Natural killer cell (primary cell): ENCODE measurements at regions of chr11 and their contacts with region 1.

Region 1: DNA sequence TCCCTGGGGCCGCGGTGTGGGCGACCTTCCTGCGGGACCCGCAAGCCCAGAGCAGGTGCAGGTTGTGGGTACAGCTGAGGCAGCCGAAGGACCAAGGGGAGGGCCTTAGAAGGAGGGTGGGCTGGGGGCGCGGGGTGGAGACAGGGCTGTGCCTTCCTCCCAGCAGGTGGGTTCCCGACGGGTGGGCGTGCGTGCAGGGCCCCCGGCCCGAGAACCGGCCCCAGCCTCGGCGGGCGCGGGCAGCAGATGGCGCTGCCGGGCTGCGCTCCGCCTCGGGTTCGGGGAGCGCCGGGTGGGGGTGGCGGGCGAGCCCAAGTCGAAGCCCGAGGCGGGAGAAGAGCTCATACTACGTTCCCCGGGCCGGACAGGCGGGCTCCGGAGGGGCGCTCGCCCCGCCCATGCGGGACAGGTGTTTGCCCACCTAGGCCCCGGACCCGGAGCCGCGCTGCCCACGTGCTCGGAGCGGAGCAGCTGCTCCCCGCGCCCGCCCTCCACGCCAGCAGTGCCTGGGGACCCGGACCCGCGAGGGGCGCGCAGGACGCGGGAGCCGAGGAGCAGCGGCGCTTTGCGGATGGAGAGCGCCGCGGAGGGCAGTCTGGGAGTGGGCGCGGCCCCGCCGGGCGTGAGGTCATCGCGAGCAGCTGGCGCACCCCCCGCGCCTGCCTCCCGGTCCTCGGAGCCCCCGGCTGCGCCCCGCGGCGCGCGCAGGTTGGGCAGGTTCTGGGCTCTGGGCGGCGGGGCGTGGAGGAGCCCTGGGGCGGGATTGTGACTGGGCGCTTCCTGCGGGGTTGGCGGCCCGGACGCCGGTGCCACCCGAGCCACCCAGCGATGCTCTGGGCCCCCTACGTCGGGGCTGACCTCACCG is 25.3 kb downstream of the DUSP8 start:
- DNase-seq: peak in 1 of 2 donors; percentile 78
- ATAC-seq: peak; percentile 70 to 76 (median 75)
- H3K4me3 ChIP-seq: no peak overlapping the region
- H3K4me3 Mint-ChIP-seq: no peak overlapping the region
- H3K27ac ChIP-seq: no peak overlapping the region
- H3K27ac Mint-ChIP-seq: no peak overlapping the region
- H3K4me1 ChIP-seq: peaks cover 17% of the 10 kb centered on the region
- H3K4me1 Mint-ChIP-seq: no peaks in the 10 kb centered on the region
- H3K27me3 ChIP-seq: peaks cover 17% of the 10 kb centered on the region
- H3K27me3 Mint-ChIP-seq: peaks cover 18 to 27% of the 10 kb centered on the region in 2 donors
- CTCF ChIP-seq: peak; percentile 68

Region 2: GRCh38 chr11:1564535-1565172 is 17.9 kb after region 1 on chr11:
- intact Hi-C with region 1: no loop called
- DNase-seq: peak; percentile 44 to 52
- ATAC-seq: peak in 1 of 3 donors; percentile 27
- H3K4me3 ChIP-seq: no peak overlapping the region
- H3K4me3 Mint-ChIP-seq: no peak overlapping the region
- H3K27ac ChIP-seq: no peak overlapping the region
- H3K27ac Mint-ChIP-seq: no peak overlapping the region
- H3K4me1 ChIP-seq: peaks cover 29% of the 10 kb centered on the region
- H3K4me1 Mint-ChIP-seq: peaks cover 10 to 27% of the 10 kb centered on the region in 2 donors
- H3K27me3 ChIP-seq: peaks cover 1% of the 10 kb centered on the region
- H3K27me3 Mint-ChIP-seq: peaks cover 0 to 8% of the 10 kb centered on the region in 2 donors
- CTCF ChIP-seq: no peak

Region 3: GRCh38 chr11:1628506-1629325 is 81.9 kb after region 1 on chr11:
- intact Hi-C with region 1: loop called (anchors 5 kb)
- DNase-seq: peak; percentile 61 to 78
- ATAC-seq: peak; percentile 82 to 99 (median 98)
- H3K4me3 ChIP-seq: no peak overlapping the region
- H3K4me3 Mint-ChIP-seq: no peak overlapping the region
- H3K27ac ChIP-seq: no peak overlapping the region
- H3K27ac Mint-ChIP-seq: no peak overlapping the region
- H3K4me1 ChIP-seq: peaks cover 9% of the 10 kb centered on the region
- H3K4me1 Mint-ChIP-seq: no peaks in the 10 kb centered on the region
- H3K27me3 ChIP-seq: peaks cover 7% of the 10 kb centered on the region
- H3K27me3 Mint-ChIP-seq: peaks cover 31 to 51% of the 10 kb centered on the region in 2 donors
- CTCF ChIP-seq: peak; percentile 85

Region 4: DNA sequence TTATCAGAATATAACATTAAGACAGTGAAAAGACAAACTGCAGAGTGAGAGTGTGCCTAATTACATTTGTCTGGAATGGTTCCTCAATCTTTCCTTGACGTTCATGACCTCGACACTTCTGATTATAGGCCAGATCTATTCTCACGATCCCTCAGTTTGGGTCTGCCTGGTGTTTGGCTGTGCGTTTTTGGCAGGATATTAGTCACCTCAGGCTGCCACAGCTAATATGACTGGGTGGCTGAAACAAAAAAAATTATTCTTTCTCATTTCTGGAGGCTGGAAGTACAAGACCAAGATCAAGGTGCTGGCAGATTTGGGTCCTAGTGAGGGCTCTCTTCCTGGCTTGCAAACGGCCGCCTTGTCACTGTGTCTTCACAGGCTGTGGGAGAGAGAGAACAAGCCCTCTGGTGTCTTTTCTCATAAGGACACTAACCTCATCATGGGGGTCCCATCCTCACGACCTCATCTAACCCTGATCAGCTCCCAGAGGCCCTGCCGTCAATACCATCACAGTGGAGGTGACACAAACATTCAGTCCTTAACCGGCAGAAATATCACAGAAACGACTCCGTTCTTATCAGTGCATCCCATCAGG is 180.4 kb after region 1 on chr11:
- intact Hi-C with region 1: no loop called
- DNase-seq: no peak
- ATAC-seq: no peak
- H3K4me3 ChIP-seq: no peak overlapping the region
- H3K4me3 Mint-ChIP-seq: no peak overlapping the region
- H3K27ac ChIP-seq: no peak overlapping the region
- H3K27ac Mint-ChIP-seq: no peak overlapping the region
- H3K4me1 ChIP-seq: peaks cover 23% of the 10 kb centered on the region
- H3K4me1 Mint-ChIP-seq: peaks cover 40 to 48% of the 10 kb centered on the region in 2 donors
- H3K27me3 ChIP-seq: no peaks in the 10 kb centered on the region
- H3K27me3 Mint-ChIP-seq: peaks cover 11 to 28% of the 10 kb centered on the region in 2 donors
- CTCF ChIP-seq: no peak